Transverse colon (tissue), 4 donors: ENCODE measurements at regions of chr4 and their contacts with region 1.

Region 1: GRCh38 chr4:173469622-173470021 is 60.4 kb downstream of the HAND2 start:
- DNase-seq: no peak
- H3K4me3 ChIP-seq: no peak overlapping the region
- H3K27ac ChIP-seq: no peak overlapping the region
- H3K4me1 ChIP-seq: no peaks in the 10 kb centered on the region
- H3K27me3 ChIP-seq: no peaks in the 10 kb centered on the region
- CTCF ChIP-seq: no peak
- EP300 ChIP-seq: no peak
- POLR2A ChIP-seq: no peak

Region 2: DNA sequence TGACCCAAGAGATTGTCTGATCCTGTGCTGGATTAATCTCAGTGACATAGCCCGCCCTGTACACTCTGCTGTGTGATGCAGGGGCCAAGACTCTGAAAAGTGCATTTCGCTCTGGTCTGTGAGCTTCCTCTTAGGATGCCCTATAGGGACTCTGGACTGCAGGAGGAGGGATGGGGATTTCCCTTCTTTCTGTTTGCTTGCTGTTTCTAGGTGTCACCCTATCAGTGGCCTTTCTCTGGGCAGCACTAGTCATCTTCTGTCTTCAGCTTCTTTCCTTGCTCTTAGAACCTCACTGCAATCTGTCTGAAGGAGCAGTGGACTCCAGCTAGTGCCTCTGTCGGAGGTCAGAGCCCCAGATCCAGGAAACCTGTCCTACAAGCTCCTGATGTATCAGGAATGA is 36.2 kb before region 1 on chr4:
- in situ Hi-C with region 1: no loop called
- intact Hi-C with region 1: loop called (anchors 1 kb)
- DNase-seq: no peak
- H3K4me3 ChIP-seq: no peak overlapping the region
- H3K27ac ChIP-seq: no peak overlapping the region
- H3K4me1 ChIP-seq: peaks cover 0 to 5% (median 0%) of the 10 kb centered on the region in 4 donors
- H3K27me3 ChIP-seq: no peaks in the 10 kb centered on the region
- CTCF ChIP-seq: no peak
- EP300 ChIP-seq: no peak
- POLR2A ChIP-seq: no peak

Region 3: DNA sequence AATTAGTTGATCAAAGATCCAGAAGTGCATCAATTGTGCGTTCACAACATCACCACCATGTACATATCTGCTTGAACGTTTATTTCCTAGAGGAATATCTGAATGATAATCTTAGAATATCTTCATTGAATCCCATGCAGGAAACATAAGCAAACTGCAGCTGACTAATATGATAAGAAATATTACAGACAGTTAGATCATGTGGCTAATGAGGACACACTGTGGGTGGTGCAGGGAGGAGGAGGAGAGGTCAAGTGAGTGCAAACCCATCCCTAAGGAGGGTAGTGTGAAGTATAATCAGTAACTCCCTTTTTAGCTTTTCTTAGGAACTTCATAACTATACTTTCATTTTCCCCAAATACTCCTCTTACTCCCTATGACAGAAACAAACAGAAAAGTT is 1111.0 kb after region 1 on chr4:
- in situ Hi-C with region 1: no loop called
- intact Hi-C with region 1: no loop called
- DNase-seq: no peak
- H3K4me3 ChIP-seq: no peak overlapping the region
- H3K27ac ChIP-seq: no peak overlapping the region
- H3K4me1 ChIP-seq: no peaks in the 10 kb centered on the region
- H3K27me3 ChIP-seq: no peaks in the 10 kb centered on the region
- CTCF ChIP-seq: no peak
- EP300 ChIP-seq: no peak
- POLR2A ChIP-seq: no peak